ENCODE measurements at regions of chr1 and their contacts with region 1.

Region 1: GRCh38 chr1:117740496-117740895 is 134.6 kb downstream of the TENT5C start:
- DNase-seq: no peak
- H3K4me3 ChIP-seq: no peak overlapping the region
- H3K27ac ChIP-seq: no peak overlapping the region
- H3K4me1 ChIP-seq: no peaks in the 10 kb centered on the region
- H3K27me3 ChIP-seq: no peaks in the 10 kb centered on the region
- CTCF ChIP-seq: no peak

Region 2: DNA sequence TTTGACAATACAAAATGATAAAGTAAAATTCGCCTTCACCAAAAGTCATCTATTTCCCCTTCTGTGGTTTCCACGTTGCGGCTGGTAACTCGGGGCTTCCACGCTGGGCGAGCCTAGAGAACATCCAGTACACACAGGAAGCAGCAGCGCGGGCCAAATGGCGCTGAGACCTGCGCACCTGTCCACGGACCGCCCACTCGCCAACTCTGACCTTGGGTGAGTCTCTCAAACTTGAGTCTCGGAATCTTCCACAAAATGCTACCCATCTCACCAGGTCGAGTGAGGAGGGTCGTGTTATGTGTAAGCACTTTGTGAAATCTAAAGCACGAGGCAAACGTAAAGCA is 681.2 kb before region 1 on chr1:
- CTCF ChIA-PET with region 1: no interaction called
- dilution Hi-C with region 1: no loop called
- in situ Hi-C with region 1: no loop called
- intact Hi-C with region 1: no loop called
- DNase-seq: peak; percentile 49
- H3K4me3 ChIP-seq: peak overlapping the region; percentile 78 to 99 (median 87)
- H3K27ac ChIP-seq: peak overlapping the region; percentile 32
- H3K4me1 ChIP-seq: peaks cover 26% of the 10 kb centered on the region
- H3K27me3 ChIP-seq: no peaks in the 10 kb centered on the region
- CTCF ChIP-seq: no peak

Region 3: GRCh38 chr1:117586747-117587498 is 153.6 kb before region 1 on chr1:
- CTCF ChIA-PET with region 1: no interaction called
- dilution Hi-C with region 1: no loop called
- in situ Hi-C with region 1: no loop called
- intact Hi-C with region 1: no loop called
- DNase-seq: no peak
- H3K4me3 ChIP-seq: no peak overlapping the region
- H3K27ac ChIP-seq: no peak overlapping the region
- H3K4me1 ChIP-seq: no peaks in the 10 kb centered on the region
- H3K27me3 ChIP-seq: no peaks in the 10 kb centered on the region
- CTCF ChIP-seq: no peak

Region 4: GRCh38 chr1:117802531-117803257 is 62.2 kb after region 1 on chr1:
- CTCF ChIA-PET with region 1: no interaction called
- dilution Hi-C with region 1: loop called (anchors 10 kb)
- in situ Hi-C with region 1: no loop called
- intact Hi-C with region 1: no loop called
- DNase-seq: peak; percentile 28
- H3K4me3 ChIP-seq: no peak overlapping the region
- H3K27ac ChIP-seq: no peak overlapping the region
- H3K4me1 ChIP-seq: no peaks in the 10 kb centered on the region
- H3K27me3 ChIP-seq: peaks cover 5% of the 10 kb centered on the region
- CTCF ChIP-seq: no peak

Region 5: DNA sequence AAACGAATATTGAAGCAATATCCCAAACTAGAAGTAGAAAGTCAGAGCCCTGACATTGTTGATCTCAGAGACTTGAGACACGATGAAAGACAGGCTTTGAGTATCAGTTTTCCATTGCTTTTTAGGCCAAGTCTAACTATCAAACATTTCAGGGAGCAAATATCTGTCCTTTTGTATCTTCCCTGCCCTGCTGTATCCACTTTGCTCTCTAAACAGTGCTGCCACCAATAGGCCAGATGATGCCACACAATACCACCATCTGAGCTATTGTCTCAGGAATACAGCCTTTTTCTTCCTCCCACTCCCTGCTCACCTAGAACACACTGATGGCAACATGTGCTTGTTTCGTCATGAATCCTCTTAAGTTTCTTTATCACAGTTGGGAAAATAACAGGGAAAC is 507.1 kb after region 1 on chr1:
- CTCF ChIA-PET with region 1: no interaction called
- dilution Hi-C with region 1: no loop called
- in situ Hi-C with region 1: no loop called
- intact Hi-C with region 1: no loop called
- DNase-seq: peak; percentile 23
- H3K4me3 ChIP-seq: no peak overlapping the region
- H3K27ac ChIP-seq: no peak overlapping the region
- H3K4me1 ChIP-seq: no peaks in the 10 kb centered on the region
- H3K27me3 ChIP-seq: no peaks in the 10 kb centered on the region
- CTCF ChIP-seq: peak; percentile 50 to 79